B cell (primary cell): ENCODE measurements at regions of chr12 and their contacts with region 1.

Region 1: GRCh38 chr12:102883204-102883799 is 33.7 kb downstream of the PAH start:
- DNase-seq: peak; percentile 53
- ATAC-seq: peak; percentile 54
- H3K4me3 ChIP-seq: no peak overlapping the region
- H3K4me3 Mint-ChIP-seq: no peak overlapping the region
- H3K27ac ChIP-seq: no peak overlapping the region
- H3K27ac Mint-ChIP-seq: no peak overlapping the region
- H3K4me1 ChIP-seq: peaks cover 0 to 3% of the 10 kb centered on the region in 2 donors
- H3K4me1 Mint-ChIP-seq: peaks cover 4% of the 10 kb centered on the region
- H3K27me3 ChIP-seq: peaks cover 0 to 6% (median 2%) of the 10 kb centered on the region in 4 experiments
- H3K27me3 Mint-ChIP-seq: peaks cover 38% of the 10 kb centered on the region
- CTCF ChIP-seq: peak; percentile 88

Region 2: DNA sequence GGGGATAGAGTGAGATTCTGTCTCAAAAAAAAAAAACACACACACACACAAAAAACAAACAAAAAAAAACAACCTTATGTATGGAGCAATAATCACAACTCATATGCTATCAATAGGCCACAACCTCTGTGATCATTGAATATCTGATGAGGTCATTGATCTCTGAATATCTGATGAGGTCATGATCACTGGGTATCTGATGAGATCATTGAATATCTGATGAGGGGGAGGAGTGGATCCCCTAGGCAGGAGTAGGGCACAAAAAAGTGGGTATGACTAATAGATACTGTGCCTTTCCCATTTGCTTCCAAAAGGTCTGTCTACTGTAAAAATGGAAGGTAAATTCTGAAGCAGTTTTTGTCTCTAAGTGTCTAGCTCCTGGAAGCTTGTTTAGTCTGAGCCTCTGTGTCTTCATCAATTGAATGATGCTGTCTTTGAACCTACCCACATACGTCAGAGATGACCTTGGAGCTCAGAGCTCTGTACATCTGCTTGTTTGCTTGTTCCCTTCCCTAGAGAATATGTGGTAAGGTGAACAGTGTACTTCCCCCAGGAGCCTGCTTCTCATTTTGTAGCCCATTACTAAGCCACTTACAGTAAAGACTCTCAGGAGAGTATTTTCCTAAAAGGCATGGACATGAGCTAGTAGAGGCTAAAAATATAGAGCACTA is 20.2 kb after region 1 on chr12:
- CTCF ChIA-PET with region 1: interaction called, 10 read pairs
- POLR2A ChIA-PET with region 1: no interaction called
- intact Hi-C with region 1: no loop called
- DNase-seq: no peak
- ATAC-seq: peak; percentile 84
- H3K4me3 ChIP-seq: no peak overlapping the region
- H3K4me3 Mint-ChIP-seq: no peak overlapping the region
- H3K27ac ChIP-seq: no peak overlapping the region
- H3K27ac Mint-ChIP-seq: no peak overlapping the region
- H3K4me1 ChIP-seq: no peaks in the 10 kb centered on the region
- H3K4me1 Mint-ChIP-seq: no peaks in the 10 kb centered on the region
- H3K27me3 ChIP-seq: no peaks in the 10 kb centered on the region
- H3K27me3 Mint-ChIP-seq: peaks cover 19% of the 10 kb centered on the region
- CTCF ChIP-seq: no peak

Region 3: GRCh38 chr12:102913453-102914226 is 30.3 kb after region 1 on chr12:
- CTCF ChIA-PET with region 1: interaction called, 17 read pairs
- POLR2A ChIA-PET with region 1: no interaction called
- intact Hi-C with region 1: no loop called
- DNase-seq: no peak
- ATAC-seq: no peak
- H3K4me3 ChIP-seq: no peak overlapping the region
- H3K4me3 Mint-ChIP-seq: no peak overlapping the region
- H3K27ac ChIP-seq: no peak overlapping the region
- H3K27ac Mint-ChIP-seq: no peak overlapping the region
- H3K4me1 ChIP-seq: peaks cover 11 to 12% of the 10 kb centered on the region in 2 donors
- H3K4me1 Mint-ChIP-seq: peaks cover 8% of the 10 kb centered on the region
- H3K27me3 ChIP-seq: peaks cover 0 to 15% (median 7%) of the 10 kb centered on the region in 4 experiments
- H3K27me3 Mint-ChIP-seq: peaks cover 34% of the 10 kb centered on the region
- CTCF ChIP-seq: no peak

Region 4: GRCh38 chr12:103308396-103308795 is 425.1 kb after region 1 on chr12:
- CTCF ChIA-PET with region 1: no interaction called
- POLR2A ChIA-PET with region 1: no interaction called
- intact Hi-C with region 1: no loop called
- DNase-seq: no peak
- ATAC-seq: no peak
- H3K4me3 ChIP-seq: no peak overlapping the region
- H3K4me3 Mint-ChIP-seq: no peak overlapping the region
- H3K27ac ChIP-seq: no peak overlapping the region
- H3K27ac Mint-ChIP-seq: no peak overlapping the region
- H3K4me1 ChIP-seq: peaks cover 0 to 3% of the 10 kb centered on the region in 2 donors
- H3K4me1 Mint-ChIP-seq: peaks cover 14% of the 10 kb centered on the region
- H3K27me3 ChIP-seq: no peaks in the 10 kb centered on the region
- H3K27me3 Mint-ChIP-seq: no peaks in the 10 kb centered on the region
- CTCF ChIP-seq: no peak